CD8-positive, alpha-beta memory T cell (primary cell): ENCODE measurements at regions of chrX and their contacts with region 1.

Region 1: GRCh38 chrX:53317365-53318069 is 36.1 kb upstream of the IQSEC2 start:
- DNase-seq: peak; percentile 49 to 77 (median 68)
- H3K4me3 ChIP-seq: no peak overlapping the region
- H3K4me3 Mint-ChIP-seq: peak overlapping the region in 2 of 7 donors; percentile 51 to 73
- H3K27ac ChIP-seq: no peak overlapping the region
- H3K27ac Mint-ChIP-seq: no peak overlapping the region
- H3K4me1 ChIP-seq: peaks cover 10% of the 10 kb centered on the region
- H3K4me1 Mint-ChIP-seq: peaks cover 22 to 25% (median 24%) of the 10 kb centered on the region in 3 donors
- H3K27me3 ChIP-seq: peaks cover 18% of the 10 kb centered on the region
- H3K27me3 Mint-ChIP-seq: peaks cover 30 to 32% of the 10 kb centered on the region in 2 donors

Region 2: GRCh38 chrX:53435997-53436396 is 118.5 kb after region 1 on chrX:
- CTCF ChIA-PET with region 1: interaction called, 12 read pairs
- POLR2A ChIA-PET with region 1: no interaction called
- DNase-seq: peak; percentile 37 to 71 (median 67)
- H3K4me3 ChIP-seq: no peak overlapping the region
- H3K4me3 Mint-ChIP-seq: peak overlapping the region in 2 of 7 donors; percentile 26 to 32
- H3K27ac ChIP-seq: no peak overlapping the region
- H3K27ac Mint-ChIP-seq: peak overlapping the region in 2 of 8 donors; percentile 23 to 29
- H3K4me1 ChIP-seq: peaks cover 14% of the 10 kb centered on the region
- H3K4me1 Mint-ChIP-seq: peaks cover 19 to 21% (median 19%) of the 10 kb centered on the region in 3 donors
- H3K27me3 ChIP-seq: no peaks in the 10 kb centered on the region
- H3K27me3 Mint-ChIP-seq: peaks cover 0 to 11% of the 10 kb centered on the region in 2 donors

Region 3: GRCh38 chrX:53445977-53446376 is 128.5 kb after region 1 on chrX:
- CTCF ChIA-PET with region 1: interaction called, 16 read pairs
- POLR2A ChIA-PET with region 1: no interaction called
- DNase-seq: peak in 3 of 5 donors; percentile 9 to 54 (median 22)
- H3K4me3 ChIP-seq: no peak overlapping the region
- H3K4me3 Mint-ChIP-seq: no peak overlapping the region
- H3K27ac ChIP-seq: no peak overlapping the region
- H3K27ac Mint-ChIP-seq: no peak overlapping the region
- H3K4me1 ChIP-seq: peaks cover 3% of the 10 kb centered on the region
- H3K4me1 Mint-ChIP-seq: peaks cover 6 to 8% (median 6%) of the 10 kb centered on the region in 3 donors
- H3K27me3 ChIP-seq: no peaks in the 10 kb centered on the region
- H3K27me3 Mint-ChIP-seq: peaks cover 0 to 9% of the 10 kb centered on the region in 2 donors

Region 4: GRCh38 chrX:53481816-53482465 is 164.4 kb after region 1 on chrX:
- CTCF ChIA-PET with region 1: interaction called, 10 read pairs
- POLR2A ChIA-PET with region 1: no interaction called
- DNase-seq: peak; percentile 9 to 57 (median 33)
- H3K4me3 ChIP-seq: no peak overlapping the region
- H3K4me3 Mint-ChIP-seq: no peak overlapping the region
- H3K27ac ChIP-seq: no peak overlapping the region
- H3K27ac Mint-ChIP-seq: no peak overlapping the region
- H3K4me1 ChIP-seq: no peaks in the 10 kb centered on the region
- H3K4me1 Mint-ChIP-seq: peaks cover 2 to 4% (median 3%) of the 10 kb centered on the region in 3 donors
- H3K27me3 ChIP-seq: no peaks in the 10 kb centered on the region
- H3K27me3 Mint-ChIP-seq: peaks cover 0 to 13% of the 10 kb centered on the region in 2 donors